ENCODE measurements at regions of chr16 and their contacts with region 1.

Region 1: GRCh38 chr16:28166394-28167208 is 45.2 kb downstream of the XPO6 start:
- DNase-seq: peak; percentile 68
- H3K4me3 Mint-ChIP-seq: peak overlapping the region; percentile 11
- H3K27ac Mint-ChIP-seq: peak overlapping the region; percentile 61
- H3K4me1 Mint-ChIP-seq: peaks cover 67% of the 10 kb centered on the region
- H3K27me3 Mint-ChIP-seq: no peaks in the 10 kb centered on the region

Region 2: GRCh38 chr16:28182183-28182582 is 15.6 kb after region 1 on chr16:
- intact Hi-C with region 1: loop called (anchors 1 kb)
- DNase-seq: peak; percentile 75
- H3K4me3 Mint-ChIP-seq: peak overlapping the region; percentile 82
- H3K27ac Mint-ChIP-seq: peak overlapping the region; percentile 99
- H3K4me1 Mint-ChIP-seq: peaks cover 72% of the 10 kb centered on the region
- H3K27me3 Mint-ChIP-seq: no peaks in the 10 kb centered on the region

Region 3: GRCh38 chr16:28187595-28188004 is 21.0 kb after region 1 on chr16:
- intact Hi-C with region 1: loop called (anchors 1 kb)
- DNase-seq: peak; percentile 79
- H3K4me3 Mint-ChIP-seq: peak overlapping the region; percentile 67
- H3K27ac Mint-ChIP-seq: peak overlapping the region; percentile 87
- H3K4me1 Mint-ChIP-seq: peaks cover 82% of the 10 kb centered on the region
- H3K27me3 Mint-ChIP-seq: no peaks in the 10 kb centered on the region

Measured in activated CD4-positive, alpha-beta T cell treated with anti-CD3 and anti-CD28 coated beads, Interleukin-2, amount 10 ng/mL, durations not matched to agents 24 days and 14 days (primary cell).